ENCODE measurements at regions of chrX and their contacts with region 1.

Region 1: GRCh38 chrX:9595131-9595530 is 130.3 kb downstream of the TBL1X start:
- DNase-seq: no peak

Region 2: GRCh38 chrX:9207142-9207541 is 388.0 kb before region 1 on chrX:
- intact Hi-C with region 1: no loop called
- DNase-seq: peak; percentile 80

Region 3: GRCh38 chrX:9626379-9626778 is 31.2 kb after region 1 on chrX:
- intact Hi-C with region 1: no loop called
- DNase-seq: no peak

Region 4: GRCh38 chrX:9807355-9808182 is 212.4 kb after region 1 on chrX:
- intact Hi-C with region 1: loop called in 1 of 2 experiments (anchors 10 kb)
- DNase-seq: no peak